Astrocyte of the cerebellum (primary cell): ENCODE measurements at regions of chr5 and their contacts with region 1.

Region 1: DNA sequence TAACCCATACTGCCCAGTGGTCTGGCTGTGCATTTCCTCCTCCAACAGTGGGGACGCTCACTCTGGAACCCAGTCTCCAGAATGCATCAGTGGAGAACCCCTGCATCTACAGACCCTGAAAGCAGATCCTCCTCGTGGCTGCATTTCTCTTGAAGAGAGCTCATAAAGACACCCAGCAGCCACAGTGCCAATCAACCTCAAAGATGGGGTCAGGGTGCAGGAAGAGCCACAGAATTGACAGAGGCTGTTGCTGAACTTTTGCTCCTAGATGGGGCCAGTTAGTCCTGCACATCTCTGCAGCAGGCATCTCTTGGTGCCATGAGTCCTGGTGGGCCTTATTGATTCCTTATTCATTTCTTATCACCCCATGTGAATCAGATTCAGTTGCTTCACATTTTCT is 39.6 kb downstream of the ADRB2 start:
- DNase-seq: no peak
- H3K4me3 ChIP-seq: no peak overlapping the region
- CTCF ChIP-seq: no peak

Region 2: GRCh38 chr5:148482691-148483462 is 383.1 kb before region 1 on chr5:
- in situ Hi-C with region 1: no loop called
- DNase-seq: no peak
- H3K4me3 ChIP-seq: no peak overlapping the region
- CTCF ChIP-seq: peak; percentile 51

Region 3: DNA sequence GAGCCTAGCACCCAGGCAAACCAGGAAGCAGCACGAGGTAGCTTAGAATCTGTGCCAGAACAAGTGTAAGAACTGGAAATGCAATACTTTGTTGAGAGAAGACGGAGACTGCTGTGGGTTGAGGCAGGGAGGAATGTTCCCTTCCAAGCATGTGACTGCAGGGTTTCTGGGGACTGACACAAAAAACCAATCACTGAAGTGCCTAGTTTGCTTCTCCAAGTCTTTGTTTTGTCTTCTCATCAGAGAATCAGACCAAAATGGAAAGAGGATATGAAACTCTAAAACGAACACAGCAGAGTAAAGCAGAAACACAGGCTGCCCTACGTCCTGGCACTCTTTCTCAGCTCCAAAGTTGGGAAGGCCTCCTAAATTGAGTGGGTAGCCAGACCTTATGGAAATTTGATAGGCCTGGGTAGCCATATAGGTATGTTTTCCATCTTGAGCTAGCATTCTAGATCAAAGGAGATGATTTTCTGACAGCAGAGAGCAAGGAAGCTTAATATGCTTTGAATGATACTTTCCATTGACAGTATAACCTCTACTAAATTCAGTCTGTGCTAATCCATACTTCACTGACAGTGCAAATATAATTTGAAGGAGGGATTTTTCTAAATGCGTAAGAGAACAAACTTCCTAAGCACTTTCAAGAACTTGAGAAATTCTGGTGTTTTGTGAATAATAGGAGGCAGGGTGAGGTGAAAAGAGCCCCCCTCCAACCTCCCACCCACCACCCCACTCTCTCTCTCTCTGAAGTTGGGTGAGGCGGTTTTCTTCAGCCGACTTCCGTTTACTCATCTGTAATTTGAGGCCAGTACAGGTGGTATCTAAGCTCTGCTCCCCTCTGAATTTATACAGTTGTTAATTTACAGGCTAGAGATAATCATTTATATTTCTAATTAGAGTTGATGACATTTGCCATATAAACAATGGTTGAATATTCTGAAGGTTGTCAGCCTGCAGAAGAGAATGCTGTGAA is 34.1 kb before region 1 on chr5:
- in situ Hi-C with region 1: loop called (anchors 5 kb)
- DNase-seq: no peak
- H3K4me3 ChIP-seq: no peak overlapping the region
- CTCF ChIP-seq: no peak